Common myeloid progenitor, CD34-positive (primary cell): ENCODE measurements at regions of chr1 and their contacts with region 1.

Region 1: DNA sequence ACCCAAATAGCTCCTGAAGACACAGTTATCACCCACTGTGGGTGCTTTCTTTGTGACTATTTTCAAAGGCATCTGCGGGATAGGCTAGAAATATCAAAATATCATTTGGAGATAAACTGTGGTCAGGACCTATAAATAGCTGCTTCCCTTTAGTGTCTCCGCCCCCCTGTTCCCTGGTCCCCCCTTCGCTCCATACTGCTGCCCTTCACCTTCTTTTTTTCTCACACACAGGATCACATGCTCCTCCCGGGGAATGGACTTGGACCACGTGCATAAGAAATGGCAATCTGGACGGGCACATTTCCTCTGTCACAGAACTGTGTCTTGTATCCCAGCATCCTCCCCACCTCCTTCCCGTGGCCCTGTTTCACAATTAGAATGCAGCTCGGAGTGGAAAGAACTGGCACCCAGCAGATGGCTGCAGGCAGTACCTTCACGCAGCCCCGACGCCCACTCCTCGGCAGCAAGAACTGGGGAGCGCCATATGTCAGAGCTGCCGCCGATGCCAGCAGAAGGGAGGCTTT is 68.8 kb upstream of the SSX2IP start:
- DNase-seq: peak; percentile 14 to 60 (median 52)
- H3K4me3 ChIP-seq: peak overlapping the region in 5 of 7 experiments; percentile 38 to 72 (median 48)
- H3K27ac ChIP-seq: no peak overlapping the region
- H3K4me1 ChIP-seq: peaks cover 0 to 12% (median 7%) of the 10 kb centered on the region in 4 experiments
- H3K27me3 ChIP-seq: no peaks in the 10 kb centered on the region

Region 2: GRCh38 chr1:84772428-84772943 is 13.5 kb after region 1 on chr1:
- CTCF ChIA-PET with region 1: interaction called, 37 read pairs
- POLR2A ChIA-PET with region 1: no interaction called
- DNase-seq: peak; percentile 79 to 87 (median 80)
- H3K4me3 ChIP-seq: no peak overlapping the region
- H3K27ac ChIP-seq: no peak overlapping the region
- H3K4me1 ChIP-seq: no peaks in the 10 kb centered on the region
- H3K27me3 ChIP-seq: no peaks in the 10 kb centered on the region

Region 3: DNA sequence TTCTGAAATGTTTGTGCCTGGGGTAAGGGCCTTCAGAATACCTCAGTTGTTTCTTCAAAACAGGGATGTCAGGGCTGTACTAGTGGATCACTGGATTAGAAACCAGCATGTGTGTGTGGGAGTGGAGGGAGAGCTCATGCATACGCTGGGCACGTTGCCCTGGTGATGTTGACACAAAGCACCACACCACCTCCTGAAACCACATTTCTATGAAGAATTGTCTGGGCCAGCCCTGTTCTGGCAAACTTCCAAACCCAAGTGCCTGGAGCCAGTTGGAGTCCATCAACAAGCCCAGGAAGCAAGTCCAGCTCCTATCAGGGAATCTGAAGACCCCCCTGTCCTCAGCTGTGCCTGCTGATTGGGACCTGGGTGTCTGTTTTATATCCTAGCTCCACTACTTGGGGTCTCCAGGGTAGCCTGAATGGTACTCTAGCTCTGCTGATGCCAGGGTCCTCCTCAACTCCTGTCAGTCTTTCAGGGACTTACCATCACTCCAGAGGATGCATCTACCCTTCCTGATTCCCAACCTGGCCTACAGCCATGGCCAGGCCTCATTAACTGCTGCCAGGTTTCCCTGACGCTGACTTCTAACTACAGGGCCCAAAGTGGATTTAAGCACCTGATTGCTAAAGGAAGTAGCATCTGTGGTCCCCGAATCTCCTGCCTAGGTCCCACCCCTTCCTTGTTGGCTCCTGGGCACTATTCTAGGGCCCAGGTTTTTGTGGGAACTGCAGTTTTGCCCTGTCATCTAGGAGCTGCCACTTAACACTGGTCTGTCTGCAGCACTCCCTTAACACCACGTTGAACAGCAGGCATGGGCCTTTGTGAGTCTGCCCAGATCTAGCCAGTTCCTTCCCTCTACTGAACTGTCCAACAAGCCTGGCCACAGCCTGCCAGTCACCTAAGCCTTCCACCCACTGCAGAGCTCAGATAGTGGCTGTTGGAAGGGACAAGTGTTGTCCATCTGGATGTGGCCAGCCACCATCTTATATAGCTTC is 88.5 kb after region 1 on chr1:
- CTCF ChIA-PET with region 1: no interaction called
- POLR2A ChIA-PET with region 1: no interaction called
- DNase-seq: peak; percentile 69 to 94 (median 92)
- H3K4me3 ChIP-seq: peak overlapping the region in 1 of 7 experiments; percentile 2
- H3K27ac ChIP-seq: no peak overlapping the region
- H3K4me1 ChIP-seq: peaks cover 0 to 30% (median 14%) of the 10 kb centered on the region in 4 experiments
- H3K27me3 ChIP-seq: no peaks in the 10 kb centered on the region